Dorsolateral prefrontal cortex (tissue), 120 donors: ENCODE measurements at regions of chr11 and their contacts with region 1.

Region 1: GRCh38 chr11:78139422-78140391 is at the start of gene ALG8:
- DNase-seq: peak; percentile 87 to 96 (median 91)
- H3K4me3 ChIP-seq: peak within 1 kb of the TSS; percentile 50 to 99 (median 86)
- H3K27ac ChIP-seq: peak within 1 kb of the TSS in 51 of 59 donors; percentile 12 to 91 (median 67)
- H3K27me3 ChIP-seq: no peaks in the 10 kb centered on the region
- CTCF ChIP-seq: peak in 38 of 56 donors; percentile 9 to 66 (median 30)
- total RNA-seq, gene ALG8: 22.3 to 55.7 (median 33.7) TPM

Region 2: DNA sequence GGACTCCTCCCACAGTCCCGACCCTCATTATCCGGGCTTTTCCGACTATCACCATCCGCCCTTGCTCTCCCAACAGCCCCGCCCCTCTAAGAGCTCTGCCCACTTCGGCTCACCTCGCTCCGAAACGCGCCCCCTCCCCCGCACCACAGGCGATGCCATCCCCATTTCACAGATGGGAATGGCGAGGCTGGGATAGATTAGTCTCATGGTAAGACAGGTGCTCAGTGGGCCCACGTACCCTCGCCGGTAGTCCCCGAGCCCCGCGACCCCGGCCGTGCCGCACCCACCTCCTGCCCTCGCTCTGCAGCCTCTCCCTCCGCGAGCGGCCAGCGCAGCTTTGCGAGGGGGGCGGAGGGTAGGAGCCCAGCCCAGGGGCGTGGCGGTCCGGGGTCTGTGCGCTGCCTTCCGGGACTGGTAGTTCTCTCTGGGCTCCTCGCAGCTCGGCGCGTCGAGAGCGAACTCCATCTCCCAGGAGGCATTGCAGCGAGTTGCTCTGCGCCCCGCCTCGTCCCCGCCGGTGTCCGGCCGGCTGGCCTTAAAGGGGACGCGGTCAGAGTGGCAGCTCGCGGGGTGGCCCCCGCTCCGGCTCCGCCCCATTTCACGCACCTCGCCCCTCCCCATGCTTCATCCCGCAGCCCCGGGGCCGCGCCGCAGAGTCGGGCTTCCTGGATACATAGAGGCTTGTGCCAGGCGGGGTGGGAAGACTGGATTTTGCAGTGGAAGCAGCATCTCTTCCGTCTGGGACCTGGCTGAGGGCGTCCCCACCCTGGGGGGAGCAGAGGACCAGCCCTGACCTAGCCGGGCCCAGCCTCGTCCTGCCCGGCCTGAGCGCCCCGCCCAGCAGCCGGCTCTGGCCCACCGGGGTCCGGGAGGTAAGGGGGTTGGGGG is 48.8 kb after region 1 on chr11 and contains the starts of genes KCTD21 and USP35:
- intact Hi-C with region 1: loop called in 1 of 2 experiments (anchors 5 kb)
- DNase-seq: peak; percentile 92 to 98 (median 96)
- H3K4me3 ChIP-seq: peak within 1 kb of the TSS; percentile 59 to 99 (median 90)
- H3K27ac ChIP-seq: peak within 1 kb of the TSS in 57 of 59 donors; percentile 25 to 94 (median 81)
- H3K27me3 ChIP-seq: no peaks in the 10 kb centered on the region
- CTCF ChIP-seq: peak in 21 of 56 donors; percentile 9 to 47 (median 22)
- total RNA-seq, gene KCTD21: 8.7 to 23.5 (median 15.9) TPM
- total RNA-seq, gene USP35: 13.0 to 38.4 (median 25.1) TPM